B cell (primary cell): ENCODE measurements at regions of chr11 and their contacts with region 1.

Region 1: DNA sequence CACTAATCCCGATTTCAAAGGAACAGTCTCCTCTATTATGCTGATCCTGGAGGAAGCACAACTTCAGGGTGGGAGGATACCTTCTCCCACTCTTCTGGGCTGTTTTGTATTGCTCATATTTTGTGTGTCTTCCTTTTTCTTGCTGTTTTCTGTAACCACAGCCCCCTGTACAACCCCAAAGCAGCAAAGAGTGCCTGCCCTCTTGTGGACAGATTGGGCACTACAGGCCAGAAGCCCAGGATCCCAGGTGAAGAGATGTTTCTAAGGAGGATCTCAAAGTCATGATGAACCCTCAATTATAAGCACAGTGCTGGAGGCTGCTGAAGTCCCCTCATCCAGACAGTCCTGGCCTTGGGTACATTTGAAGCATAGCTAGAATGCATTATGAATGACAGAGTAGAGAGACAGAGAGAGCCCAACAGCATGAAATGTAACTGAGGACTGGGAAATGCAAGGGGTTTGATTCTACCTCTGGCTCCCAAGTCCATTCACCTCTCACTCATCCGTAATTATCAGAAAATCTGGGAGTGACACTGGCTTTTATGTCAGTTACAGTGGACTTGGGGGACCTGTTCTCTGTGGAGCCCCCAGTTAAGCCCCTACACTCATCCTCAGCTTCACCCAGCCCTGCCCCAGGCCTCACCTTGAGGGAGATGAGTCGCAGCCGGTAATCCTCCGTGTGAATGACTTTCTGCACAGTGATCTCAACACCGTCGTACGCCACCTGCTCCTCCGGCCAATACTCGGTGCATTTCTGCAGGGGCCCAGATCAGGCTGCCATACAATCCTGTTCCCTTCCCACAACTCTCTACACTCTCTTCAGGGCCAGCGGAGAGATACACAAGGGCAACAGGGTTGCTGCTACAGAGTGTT is 6.2 kb upstream of the IGSF22 start:
- DNase-seq: peak; percentile 79
- ATAC-seq: peak; percentile 78
- H3K4me3 ChIP-seq: no peak overlapping the region
- H3K4me3 Mint-ChIP-seq: no peak overlapping the region
- H3K27ac ChIP-seq: peak overlapping the region in 1 of 2 donors; percentile 21
- H3K27ac Mint-ChIP-seq: no peak overlapping the region
- H3K4me1 ChIP-seq: peaks cover 12 to 17% of the 10 kb centered on the region in 2 donors
- H3K4me1 Mint-ChIP-seq: peaks cover 15% of the 10 kb centered on the region
- H3K27me3 ChIP-seq: peaks cover 0 to 3% (median 0%) of the 10 kb centered on the region in 4 experiments
- H3K27me3 Mint-ChIP-seq: peaks cover 9% of the 10 kb centered on the region
- CTCF ChIP-seq: peak; percentile 97

Region 2: GRCh38 chr11:18115360-18116127 is 616.6 kb before region 1 on chr11:
- CTCF ChIA-PET with region 1: interaction called, 92 read pairs
- POLR2A ChIA-PET with region 1: no interaction called
- intact Hi-C with region 1: loop called (anchors 1 kb)
- DNase-seq: peak; percentile 81
- ATAC-seq: peak; percentile 91
- H3K4me3 ChIP-seq: no peak overlapping the region
- H3K4me3 Mint-ChIP-seq: no peak overlapping the region
- H3K27ac ChIP-seq: no peak overlapping the region
- H3K27ac Mint-ChIP-seq: no peak overlapping the region
- H3K4me1 ChIP-seq: peaks cover 0 to 5% of the 10 kb centered on the region in 2 donors
- H3K4me1 Mint-ChIP-seq: peaks cover 2% of the 10 kb centered on the region
- H3K27me3 ChIP-seq: peaks cover 0 to 6% (median 1%) of the 10 kb centered on the region in 4 experiments
- H3K27me3 Mint-ChIP-seq: peaks cover 33% of the 10 kb centered on the region
- CTCF ChIP-seq: peak; percentile 90

Region 3: DNA sequence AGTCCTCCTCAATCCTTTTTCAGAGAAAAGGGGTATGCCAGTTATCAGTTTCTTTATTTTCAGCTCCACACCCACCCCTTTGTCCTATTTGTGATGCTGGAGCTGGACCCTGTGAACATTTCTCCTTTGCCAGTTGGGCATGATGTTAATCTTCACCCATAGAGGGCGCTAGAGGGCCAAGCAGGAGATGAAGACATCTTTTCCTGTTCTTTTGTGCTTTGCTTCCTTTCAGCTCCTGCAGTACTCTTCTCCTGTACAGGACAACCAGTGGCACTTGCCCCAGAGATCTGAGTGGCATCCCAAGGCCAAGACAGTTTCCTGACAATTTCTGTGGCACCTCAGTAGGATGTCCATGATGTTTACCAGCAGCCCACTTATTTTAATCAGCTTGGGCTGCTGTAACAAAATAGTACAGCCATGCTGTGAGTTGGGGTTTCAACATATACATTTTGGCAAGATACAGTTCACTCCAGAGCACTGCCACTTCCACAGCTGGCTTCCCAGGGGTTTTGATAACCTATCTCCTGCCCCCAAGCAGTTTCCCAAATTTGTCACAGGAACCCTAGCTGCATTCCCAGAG is 488.3 kb before region 1 on chr11:
- CTCF ChIA-PET with region 1: interaction called, 16 read pairs
- POLR2A ChIA-PET with region 1: no interaction called
- intact Hi-C with region 1: loop called (anchors 5 kb)
- DNase-seq: peak; percentile 77
- ATAC-seq: no peak
- H3K4me3 ChIP-seq: no peak overlapping the region
- H3K4me3 Mint-ChIP-seq: no peak overlapping the region
- H3K27ac ChIP-seq: no peak overlapping the region
- H3K27ac Mint-ChIP-seq: peak overlapping the region; percentile 12
- H3K4me1 ChIP-seq: peaks cover 2 to 19% of the 10 kb centered on the region in 2 donors
- H3K4me1 Mint-ChIP-seq: peaks cover 15% of the 10 kb centered on the region
- H3K27me3 ChIP-seq: peaks cover 0 to 7% (median 6%) of the 10 kb centered on the region in 4 experiments
- H3K27me3 Mint-ChIP-seq: peaks cover 14% of the 10 kb centered on the region
- CTCF ChIP-seq: peak; percentile 90

Region 4: DNA sequence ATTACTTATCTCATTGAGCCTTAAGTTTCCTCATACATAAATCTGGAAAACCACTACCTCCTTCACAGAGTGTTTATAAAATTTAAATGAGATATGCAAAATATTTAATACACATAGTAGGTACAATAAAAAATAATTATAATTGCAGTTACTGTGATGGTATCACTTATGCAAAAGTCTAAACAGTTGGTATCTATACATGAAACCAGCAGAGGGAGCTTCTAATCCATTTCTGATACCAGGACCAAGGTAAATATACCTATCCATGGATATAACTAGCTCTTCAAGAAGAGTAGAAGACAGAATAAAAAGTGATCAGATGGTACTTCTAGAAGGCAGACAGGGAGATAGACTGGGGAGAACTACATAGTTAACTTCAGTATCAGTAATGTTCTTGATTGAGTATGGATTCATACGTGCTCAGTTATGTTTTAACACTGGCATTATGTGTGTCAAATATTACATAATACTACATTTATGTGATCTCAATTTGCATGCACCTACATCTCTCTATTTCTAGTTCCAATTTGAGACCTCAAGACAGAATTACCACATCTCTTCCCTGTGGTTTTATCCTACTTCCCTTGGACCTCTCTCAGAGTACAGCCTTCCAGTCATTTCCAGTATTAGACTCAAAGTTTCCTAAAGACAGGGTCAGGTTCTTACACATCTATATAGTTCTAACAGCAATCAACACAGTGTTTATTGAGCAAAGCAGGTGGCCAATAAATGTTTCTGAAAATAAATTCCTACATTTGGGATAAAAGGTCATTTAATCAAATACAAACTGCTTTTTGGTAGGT is 191.8 kb before region 1 on chr11:
- CTCF ChIA-PET with region 1: interaction called, 19 read pairs
- POLR2A ChIA-PET with region 1: no interaction called
- intact Hi-C with region 1: no loop called
- DNase-seq: peak; percentile 17
- ATAC-seq: no peak
- H3K4me3 ChIP-seq: no peak overlapping the region
- H3K4me3 Mint-ChIP-seq: no peak overlapping the region
- H3K27ac ChIP-seq: no peak overlapping the region
- H3K27ac Mint-ChIP-seq: no peak overlapping the region
- H3K4me1 ChIP-seq: no peaks in the 10 kb centered on the region
- H3K4me1 Mint-ChIP-seq: no peaks in the 10 kb centered on the region
- H3K27me3 ChIP-seq: no peaks in the 10 kb centered on the region
- H3K27me3 Mint-ChIP-seq: no peaks in the 10 kb centered on the region
- CTCF ChIP-seq: peak; percentile 33

Region 5: GRCh38 chr11:18706330-18707243 is 25.6 kb before region 1 on chr11:
- CTCF ChIA-PET with region 1: interaction called, 10 read pairs
- POLR2A ChIA-PET with region 1: no interaction called
- intact Hi-C with region 1: no loop called
- DNase-seq: peak; percentile 88
- ATAC-seq: peak; percentile 74
- H3K4me3 ChIP-seq: peak overlapping the region in 4 of 5 experiments; percentile 54 to 95 (median 68)
- H3K4me3 Mint-ChIP-seq: peak overlapping the region; percentile 95
- H3K27ac ChIP-seq: peak overlapping the region in 1 of 2 donors; percentile 69
- H3K27ac Mint-ChIP-seq: peak overlapping the region; percentile 88
- H3K4me1 ChIP-seq: peaks cover 18 to 19% of the 10 kb centered on the region in 2 donors
- H3K4me1 Mint-ChIP-seq: peaks cover 22% of the 10 kb centered on the region
- H3K27me3 ChIP-seq: peaks cover 0 to 8% (median 0%) of the 10 kb centered on the region in 4 experiments
- H3K27me3 Mint-ChIP-seq: peaks cover 19% of the 10 kb centered on the region
- CTCF ChIP-seq: no peak

Region 6: DNA sequence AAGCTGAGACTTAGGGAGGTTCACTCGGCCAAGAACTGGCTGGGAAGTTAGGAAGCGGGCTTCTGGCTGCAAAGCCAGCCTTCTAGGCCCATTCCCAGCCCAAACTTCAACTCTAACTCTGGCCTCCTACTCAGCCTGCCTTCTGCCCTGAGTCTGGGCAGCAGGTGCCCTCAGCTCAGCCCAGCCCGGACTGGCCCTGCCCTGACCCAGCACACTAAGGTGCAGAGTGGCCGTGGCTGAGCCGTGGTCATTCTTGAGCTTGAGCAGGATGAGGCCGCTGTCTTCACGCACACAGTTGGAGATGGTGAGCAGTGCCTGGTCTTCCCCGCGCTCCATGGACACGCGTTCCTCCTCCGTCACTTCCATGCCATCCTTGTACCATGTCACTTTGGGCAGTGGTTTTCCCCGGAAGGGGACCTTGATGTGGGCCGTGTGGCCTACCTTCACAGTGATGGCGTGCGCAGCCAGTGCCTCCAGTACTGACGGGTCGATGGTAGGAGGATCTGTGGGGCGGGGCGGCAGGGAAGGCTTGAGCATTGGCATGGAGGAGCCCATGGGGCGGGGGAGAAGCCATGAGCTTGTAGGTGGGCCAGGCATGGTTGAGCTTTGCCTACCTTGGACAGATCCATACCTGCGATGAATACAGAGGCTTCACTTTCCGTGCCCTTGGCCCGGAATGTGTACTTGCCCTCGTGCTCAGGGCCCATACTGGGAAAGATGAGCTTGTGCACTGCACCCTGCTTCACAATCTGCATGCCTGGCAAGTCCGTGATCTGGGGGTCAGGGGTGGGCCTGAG is 18.3 kb before region 1 on chr11:
- CTCF ChIA-PET with region 1: interaction called, 11 read pairs
- POLR2A ChIA-PET with region 1: no interaction called
- intact Hi-C with region 1: no loop called
- DNase-seq: no peak
- ATAC-seq: no peak
- H3K4me3 ChIP-seq: no peak overlapping the region
- H3K4me3 Mint-ChIP-seq: no peak overlapping the region
- H3K27ac ChIP-seq: no peak overlapping the region
- H3K27ac Mint-ChIP-seq: no peak overlapping the region
- H3K4me1 ChIP-seq: no peaks in the 10 kb centered on the region
- H3K4me1 Mint-ChIP-seq: no peaks in the 10 kb centered on the region
- H3K27me3 ChIP-seq: peaks cover 0 to 6% (median 0%) of the 10 kb centered on the region in 4 experiments
- H3K27me3 Mint-ChIP-seq: peaks cover 20% of the 10 kb centered on the region
- CTCF ChIP-seq: no peak

Region 7: GRCh38 chr11:18721561-18722292 is 10.5 kb before region 1 on chr11:
- CTCF ChIA-PET with region 1: interaction called, 59 read pairs
- POLR2A ChIA-PET with region 1: no interaction called
- intact Hi-C with region 1: loop called (anchors 1 kb)
- DNase-seq: peak; percentile 77
- ATAC-seq: peak; percentile 66
- H3K4me3 ChIP-seq: peak overlapping the region; percentile 24 to 80 (median 69)
- H3K4me3 Mint-ChIP-seq: peak overlapping the region; percentile 92
- H3K27ac ChIP-seq: peak overlapping the region in 1 of 2 donors; percentile 11
- H3K27ac Mint-ChIP-seq: peak overlapping the region; percentile 42
- H3K4me1 ChIP-seq: peaks cover 9 to 17% of the 10 kb centered on the region in 2 donors
- H3K4me1 Mint-ChIP-seq: peaks cover 9% of the 10 kb centered on the region
- H3K27me3 ChIP-seq: no peaks in the 10 kb centered on the region
- H3K27me3 Mint-ChIP-seq: peaks cover 6% of the 10 kb centered on the region
- CTCF ChIP-seq: peak; percentile 88